ENCODE measurements at regions of chr3 and their contacts with region 1.

Region 1: GRCh38 chr3:72031581-72031980 is 246.6 kb upstream of the PROK2 start:
- H3K4me3 Mint-ChIP-seq: no peak overlapping the region
- H3K27ac Mint-ChIP-seq: peak overlapping the region; percentile 61
- H3K4me1 Mint-ChIP-seq: peaks cover 60% of the 10 kb centered on the region
- H3K27me3 Mint-ChIP-seq: no peaks in the 10 kb centered on the region

Region 2: GRCh38 chr3:71087143-71088018 is 944.2 kb before region 1 on chr3:
- intact Hi-C with region 1: no loop called
- H3K4me3 Mint-ChIP-seq: no peak overlapping the region
- H3K27ac Mint-ChIP-seq: no peak overlapping the region
- H3K4me1 Mint-ChIP-seq: peaks cover 12% of the 10 kb centered on the region
- H3K27me3 Mint-ChIP-seq: no peaks in the 10 kb centered on the region

Region 3: GRCh38 chr3:71893122-71893521 is 138.5 kb before region 1 on chr3:
- intact Hi-C with region 1: no loop called
- H3K4me3 Mint-ChIP-seq: no peak overlapping the region
- H3K27ac Mint-ChIP-seq: no peak overlapping the region
- H3K4me1 Mint-ChIP-seq: peaks cover 23% of the 10 kb centered on the region
- H3K27me3 Mint-ChIP-seq: peaks cover 92% of the 10 kb centered on the region

Region 4: GRCh38 chr3:71984843-71985613 is 46.6 kb before region 1 on chr3:
- intact Hi-C with region 1: loop called (anchors 10 kb)
- H3K4me3 Mint-ChIP-seq: no peak overlapping the region
- H3K27ac Mint-ChIP-seq: no peak overlapping the region
- H3K4me1 Mint-ChIP-seq: peaks cover 55% of the 10 kb centered on the region
- H3K27me3 Mint-ChIP-seq: peaks cover 14% of the 10 kb centered on the region

Measured in dendritic cell treated with granulocyte-macrophage colony-stimulating factor and Interleukin-4, amounts not matched to agents 40 ng/mL and 50 ng/mL, for 4 days (primary cell).